ENCODE measurements at regions of chr10 and their contacts with region 1.

Region 1: DNA sequence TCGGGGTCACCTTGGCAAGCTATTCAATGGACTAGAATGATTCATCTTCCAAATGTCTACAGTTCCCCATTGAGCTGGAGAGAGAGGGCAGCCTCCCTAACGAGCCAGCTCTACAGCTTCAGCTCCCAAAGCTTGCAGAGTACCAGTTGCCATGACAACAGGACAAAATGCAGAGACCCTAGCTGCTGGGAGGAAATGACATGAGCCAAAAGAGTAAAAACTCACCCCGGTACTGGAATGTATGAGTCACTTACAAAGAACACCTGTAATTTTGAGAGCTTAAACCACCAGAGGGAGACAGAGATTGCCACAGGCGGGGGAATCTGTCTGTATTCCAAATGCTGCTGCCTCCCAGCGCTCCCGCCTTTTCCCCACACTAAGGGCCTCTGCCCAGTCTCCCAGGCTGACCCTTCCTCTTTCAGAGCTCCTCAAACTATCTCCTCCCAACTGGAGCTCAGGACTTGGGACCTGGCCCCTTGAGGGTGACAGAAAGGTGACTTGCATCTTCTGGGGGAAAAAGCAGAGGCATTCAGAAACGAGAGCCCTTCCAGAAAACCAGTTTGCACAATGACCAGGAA is 95.5 kb downstream of the CUL2 start:
- DNase-seq: peak; percentile 73
- ATAC-seq: peak; percentile 93
- H3K4me3 Mint-ChIP-seq: no peak overlapping the region
- H3K27ac Mint-ChIP-seq: peak overlapping the region; percentile 26
- H3K4me1 Mint-ChIP-seq: peaks cover 12% of the 10 kb centered on the region
- H3K27me3 Mint-ChIP-seq: no peaks in the 10 kb centered on the region
- CTCF ChIP-seq: peak; percentile 79

Region 2: GRCh38 chr10:35027567-35027966 is 32.9 kb after region 1 on chr10:
- CTCF ChIA-PET with region 1: interaction called, 21 read pairs
- POLR2A ChIA-PET with region 1: no interaction called
- intact Hi-C with region 1: no loop called
- DNase-seq: no peak
- ATAC-seq: no peak
- H3K4me3 Mint-ChIP-seq: no peak overlapping the region
- H3K27ac Mint-ChIP-seq: no peak overlapping the region
- H3K4me1 Mint-ChIP-seq: no peaks in the 10 kb centered on the region
- H3K27me3 Mint-ChIP-seq: no peaks in the 10 kb centered on the region
- CTCF ChIP-seq: no peak

Region 3: DNA sequence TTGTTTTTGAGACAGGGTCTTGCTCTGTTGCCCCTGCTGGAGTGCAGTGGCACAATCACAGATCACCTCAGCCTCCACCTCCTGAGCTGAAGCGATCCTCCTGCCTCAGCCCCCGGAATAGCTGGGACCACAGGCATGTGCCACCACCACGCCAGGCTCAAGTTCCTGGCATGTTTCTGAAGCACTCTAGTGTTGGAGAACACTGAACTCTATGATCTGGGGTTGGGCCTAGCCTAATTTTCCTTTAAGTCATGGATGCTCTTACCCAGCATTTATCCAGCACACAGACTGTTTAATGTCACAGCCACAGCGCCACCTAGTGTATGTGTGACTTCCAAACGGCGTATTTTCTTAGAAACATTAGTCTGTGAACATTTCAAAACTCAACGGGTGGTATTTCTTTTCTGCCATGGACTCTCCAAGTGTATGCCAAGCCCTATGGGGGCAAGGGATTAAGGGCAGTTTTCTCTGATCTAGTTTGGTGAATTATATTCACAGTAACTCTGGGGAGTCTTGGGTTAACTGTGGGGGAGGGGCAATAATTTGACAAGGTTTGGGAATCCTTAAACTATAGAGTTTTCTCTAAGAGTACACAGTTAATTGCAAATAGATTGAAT is 223.8 kb after region 1 on chr10:
- CTCF ChIA-PET with region 1: interaction called, 18 read pairs
- POLR2A ChIA-PET with region 1: no interaction called
- intact Hi-C with region 1: loop called (anchors 10 kb)
- DNase-seq: peak; percentile 96
- ATAC-seq: peak; percentile 78
- H3K4me3 Mint-ChIP-seq: peak overlapping the region; percentile 37
- H3K27ac Mint-ChIP-seq: peak overlapping the region; percentile 91
- H3K4me1 Mint-ChIP-seq: peaks cover 43% of the 10 kb centered on the region
- H3K27me3 Mint-ChIP-seq: peaks cover 4% of the 10 kb centered on the region
- CTCF ChIP-seq: peak; percentile 88